Heart right ventricle (tissue), 16 donors: ENCODE measurements at regions of chr1 and their contacts with region 1.

Region 1: GRCh38 chr1:231636157-231636556 is 9.6 kb downstream of the DISC1 start:
- DNase-seq: no peak
- ATAC-seq: peak in 3 of 8 donors; percentile 35 to 71 (median 49)
- H3K4me3 ChIP-seq: no peak overlapping the region
- H3K27ac ChIP-seq: no peak overlapping the region
- H3K4me1 ChIP-seq: peaks cover 0 to 5% (median 0%) of the 10 kb centered on the region in 9 donors
- H3K27me3 ChIP-seq: no peaks in the 10 kb centered on the region
- CTCF ChIP-seq: no peak

Region 2: DNA sequence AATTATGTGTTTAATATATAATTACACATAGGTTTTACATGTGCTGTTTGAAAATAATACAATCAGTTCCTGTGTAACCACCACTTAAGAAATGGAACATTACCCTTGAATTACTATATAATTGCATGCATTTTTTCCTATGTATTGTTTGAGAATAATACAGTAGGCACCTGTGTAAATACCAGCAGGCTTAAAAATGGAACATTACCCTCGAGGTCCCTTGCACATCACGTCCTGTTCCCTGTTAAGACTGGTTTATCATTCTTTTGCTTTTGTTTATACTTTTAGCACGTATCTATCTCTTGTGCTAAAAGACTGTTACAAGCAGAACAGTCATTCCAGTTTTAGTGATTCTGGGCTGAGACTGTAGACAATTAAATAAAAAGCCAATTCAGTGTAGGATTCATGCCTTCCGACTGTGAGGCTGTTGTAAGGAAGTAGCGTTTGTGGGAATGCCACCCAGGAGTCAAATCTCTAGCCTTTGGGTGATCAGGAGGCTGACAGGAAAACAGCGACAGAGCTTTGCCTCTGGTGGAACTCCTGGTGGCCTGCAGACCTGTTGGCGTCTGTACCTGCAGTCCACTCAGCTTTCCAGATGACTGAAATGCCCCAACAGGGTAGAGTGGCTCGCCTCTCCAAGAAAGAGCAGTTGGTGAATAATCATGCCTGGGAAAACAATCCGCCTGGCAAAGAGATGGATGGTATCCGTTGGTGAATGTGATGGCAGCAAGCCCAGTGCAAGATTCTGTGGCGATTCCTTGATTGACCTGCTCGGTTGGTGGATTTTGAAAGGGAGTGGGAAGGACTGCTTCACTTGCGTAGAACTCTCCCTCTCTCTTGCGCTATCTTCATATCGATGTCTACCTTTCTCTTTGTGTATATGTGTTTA is 48.4 kb after region 1 on chr1:
- intact Hi-C with region 1: loop called in 1 of 10 experiments (anchors 10 kb)
- DNase-seq: no peak
- ATAC-seq: peak in 1 of 8 donors; percentile 40
- H3K4me3 ChIP-seq: no peak overlapping the region
- H3K27ac ChIP-seq: no peak overlapping the region
- H3K4me1 ChIP-seq: peaks cover 0 to 11% (median 0%) of the 10 kb centered on the region in 9 donors
- H3K27me3 ChIP-seq: no peaks in the 10 kb centered on the region
- CTCF ChIP-seq: no peak

Region 3: DNA sequence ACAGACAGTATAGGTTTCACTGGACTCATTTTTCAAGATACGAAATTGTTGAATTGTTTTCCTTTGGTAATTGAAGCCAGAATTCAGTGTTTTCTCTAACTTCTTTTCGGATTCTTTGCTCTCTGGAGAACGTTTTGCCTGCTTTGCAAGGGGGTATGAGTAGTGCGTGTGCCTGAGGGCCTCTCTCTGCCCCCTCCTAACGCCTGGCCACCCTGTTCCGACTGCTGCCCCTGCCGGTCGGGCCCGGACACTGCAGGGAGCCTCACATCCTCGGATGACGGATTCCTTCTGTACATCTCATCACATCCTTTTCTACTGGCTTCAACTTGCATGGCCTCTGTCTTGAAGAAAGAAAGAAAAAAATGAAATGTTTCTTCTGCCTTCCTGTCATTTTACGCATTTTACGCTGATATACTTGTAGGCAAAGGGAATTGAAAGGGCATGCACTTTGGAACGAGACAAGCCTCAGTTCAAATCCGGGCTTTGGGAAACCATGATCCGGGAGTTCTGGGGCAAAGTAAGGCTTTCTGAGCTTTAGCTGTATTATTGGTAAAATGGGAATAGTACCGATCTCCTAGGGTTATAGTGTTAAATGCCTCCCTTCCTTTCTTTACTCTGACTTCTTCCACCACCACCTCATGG is 55.6 kb after region 1 on chr1:
- intact Hi-C with region 1: loop called in 2 of 10 experiments (anchors 10 kb)
- DNase-seq: peak; percentile 21 to 51
- ATAC-seq: peak; percentile 50 to 79 (median 66)
- H3K4me3 ChIP-seq: no peak overlapping the region
- H3K27ac ChIP-seq: no peak overlapping the region
- H3K4me1 ChIP-seq: peaks cover 0 to 54% (median 21%) of the 10 kb centered on the region in 9 donors
- H3K27me3 ChIP-seq: no peaks in the 10 kb centered on the region
- CTCF ChIP-seq: peak; percentile 41 to 73 (median 63)

Region 4: DNA sequence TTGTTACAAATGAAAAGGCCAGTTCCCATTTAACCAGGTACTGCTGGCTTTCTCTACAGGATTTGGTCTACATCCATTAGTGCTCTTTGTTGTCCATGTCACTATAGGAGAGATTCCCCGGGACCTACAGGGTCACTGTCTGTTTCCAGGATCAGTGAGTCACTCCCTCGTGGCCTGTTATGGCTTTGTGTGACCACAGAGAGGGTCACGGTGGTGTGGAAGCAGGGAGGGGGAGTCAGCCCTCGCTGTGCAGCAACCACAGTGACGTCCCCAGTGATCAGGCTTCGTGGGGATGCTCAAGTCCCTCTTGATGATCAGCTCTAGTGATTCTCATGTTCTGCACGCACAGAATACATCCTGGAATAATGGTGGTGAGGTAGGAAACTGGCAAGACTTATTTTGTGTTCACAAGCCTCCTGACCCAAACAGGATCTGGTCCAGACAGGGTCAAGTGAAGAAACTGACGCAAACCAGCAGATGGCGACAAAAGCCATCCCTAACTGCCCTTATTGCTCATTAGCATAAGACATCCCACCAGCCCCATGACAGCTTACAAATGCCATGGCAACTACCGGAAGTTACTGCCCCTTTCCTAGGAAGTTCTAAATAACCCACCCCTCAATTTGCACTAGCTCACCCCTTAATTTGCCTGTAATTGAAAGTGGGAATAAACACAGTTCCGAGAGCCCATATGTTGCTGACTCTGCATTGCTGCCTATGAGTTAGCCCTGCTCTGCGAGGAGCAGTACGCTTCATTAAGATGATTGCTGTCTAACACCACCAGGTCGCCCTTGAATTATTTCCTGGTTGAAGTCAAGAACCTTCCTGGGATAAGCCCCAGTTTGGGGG is 88.9 kb after region 1 on chr1:
- intact Hi-C with region 1: no loop called
- DNase-seq: peak in 1 of 2 donors; percentile 14
- ATAC-seq: peak in 5 of 8 donors; percentile 40 to 75 (median 51)
- H3K4me3 ChIP-seq: no peak overlapping the region
- H3K27ac ChIP-seq: no peak overlapping the region
- H3K4me1 ChIP-seq: peaks cover 0 to 17% (median 0%) of the 10 kb centered on the region in 9 donors
- H3K27me3 ChIP-seq: no peaks in the 10 kb centered on the region
- CTCF ChIP-seq: peak in 7 of 9 donors; percentile 30 to 55 (median 39)